Activated naive CD4-positive, alpha-beta T cell treated with anti-CD3 and anti-CD28 coated beads for 36 hours (primary cell): ENCODE measurements at regions of chr7 and their contacts with region 1.

Region 1: GRCh38 chr7:42869131-42870020 is 42.5 kb downstream of the C7orf25 start:
- DNase-seq: peak; percentile 63
- H3K4me3 Mint-ChIP-seq: no peak overlapping the region
- H3K27ac Mint-ChIP-seq: peak overlapping the region; percentile 68
- H3K4me1 Mint-ChIP-seq: peaks cover 16% of the 10 kb centered on the region
- H3K27me3 Mint-ChIP-seq: peaks cover 10% of the 10 kb centered on the region

Region 2: GRCh38 chr7:42700406-42701327 is 168.7 kb before region 1 on chr7:
- CTCF ChIA-PET with region 1: no interaction called
- intact Hi-C with region 1: loop called (anchors 10 kb)
- DNase-seq: no peak
- H3K4me3 Mint-ChIP-seq: no peak overlapping the region
- H3K27ac Mint-ChIP-seq: no peak overlapping the region
- H3K4me1 Mint-ChIP-seq: no peaks in the 10 kb centered on the region
- H3K27me3 Mint-ChIP-seq: no peaks in the 10 kb centered on the region

Region 3: GRCh38 chr7:42792841-42793240 is 76.5 kb before region 1 on chr7:
- CTCF ChIA-PET with region 1: no interaction called
- intact Hi-C with region 1: no loop called
- DNase-seq: no peak
- H3K4me3 Mint-ChIP-seq: no peak overlapping the region
- H3K27ac Mint-ChIP-seq: no peak overlapping the region
- H3K4me1 Mint-ChIP-seq: no peaks in the 10 kb centered on the region
- H3K27me3 Mint-ChIP-seq: peaks cover 13% of the 10 kb centered on the region

Region 4: GRCh38 chr7:42856607-42856994 is 12.8 kb before region 1 on chr7:
- CTCF ChIA-PET with region 1: no interaction called
- intact Hi-C with region 1: no loop called
- DNase-seq: no peak
- H3K4me3 Mint-ChIP-seq: peak overlapping the region; percentile 25
- H3K27ac Mint-ChIP-seq: no peak overlapping the region
- H3K4me1 Mint-ChIP-seq: peaks cover 3% of the 10 kb centered on the region
- H3K27me3 Mint-ChIP-seq: peaks cover 39% of the 10 kb centered on the region